PC-3 (cell line): ENCODE measurements at regions of chr2 and their contacts with region 1.

Region 1: GRCh38 chr2:168118733-168119514 is 128.5 kb downstream of the STK39 start:
- DNase-seq: peak; percentile 85
- ATAC-seq: peak; percentile 68
- H3K4me3 ChIP-seq: no peak overlapping the region
- H3K27ac ChIP-seq: no peak overlapping the region
- H3K4me1 ChIP-seq: no peaks in the 10 kb centered on the region
- H3K27me3 ChIP-seq: no peaks in the 10 kb centered on the region
- CTCF ChIP-seq: peak; percentile 87

Region 2: GRCh38 chr2:167264380-167264779 is 854.5 kb before region 1 on chr2:
- CTCF ChIA-PET with region 1: interaction called, 6 read pairs
- POLR2A ChIA-PET with region 1: no interaction called
- intact Hi-C with region 1: loop called (anchors 10 kb)
- DNase-seq: peak; percentile 71
- ATAC-seq: peak; percentile 95
- H3K4me3 ChIP-seq: no peak overlapping the region
- H3K27ac ChIP-seq: no peak overlapping the region
- H3K4me1 ChIP-seq: no peaks in the 10 kb centered on the region
- H3K27me3 ChIP-seq: no peaks in the 10 kb centered on the region
- CTCF ChIP-seq: peak; percentile 87

Region 3: DNA sequence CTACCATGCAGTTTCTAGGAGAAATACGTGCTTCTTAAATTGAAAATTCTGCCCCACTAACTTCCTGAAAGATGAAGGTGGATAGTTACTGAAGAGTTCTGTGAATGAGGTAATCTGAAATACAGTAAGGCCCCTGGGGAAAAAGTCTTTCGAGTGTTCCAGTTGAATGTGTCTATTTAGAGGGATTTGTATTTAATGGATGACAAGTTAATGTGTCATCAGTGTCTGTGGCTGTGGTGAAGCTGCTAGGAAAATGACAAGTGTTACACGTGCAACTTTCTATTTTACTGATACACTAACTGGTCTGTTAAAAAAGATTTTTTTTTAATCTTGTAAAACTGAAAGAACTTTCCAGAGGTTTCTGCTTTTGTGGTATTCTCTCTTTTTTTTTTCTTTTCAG is 256.1 kb before region 1 on chr2:
- CTCF ChIA-PET with region 1: no interaction called
- POLR2A ChIA-PET with region 1: no interaction called
- intact Hi-C with region 1: loop called (anchors 10 kb)
- DNase-seq: peak; percentile 70
- ATAC-seq: peak; percentile 88
- H3K4me3 ChIP-seq: no peak overlapping the region
- H3K27ac ChIP-seq: no peak overlapping the region
- H3K4me1 ChIP-seq: peaks cover 11% of the 10 kb centered on the region; the same call in 1 of the 2 replicates
- H3K27me3 ChIP-seq: no peaks in the 10 kb centered on the region; the same call in 1 of the 2 replicates
- CTCF ChIP-seq: no peak

Region 4: GRCh38 chr2:167964650-167965413 is 154.1 kb before region 1 on chr2:
- CTCF ChIA-PET with region 1: interaction called, 3 read pairs
- POLR2A ChIA-PET with region 1: no interaction called
- intact Hi-C with region 1: loop called (anchors 2 kb)
- DNase-seq: peak; percentile 35
- ATAC-seq: no peak
- H3K4me3 ChIP-seq: no peak overlapping the region
- H3K27ac ChIP-seq: no peak overlapping the region
- H3K4me1 ChIP-seq: no peaks in the 10 kb centered on the region
- H3K27me3 ChIP-seq: no peaks in the 10 kb centered on the region
- CTCF ChIP-seq: peak; percentile 56

Region 5: GRCh38 chr2:168336864-168337263 is 217.9 kb after region 1 on chr2:
- CTCF ChIA-PET with region 1: interaction called, 4 read pairs
- POLR2A ChIA-PET with region 1: no interaction called
- intact Hi-C with region 1: loop called (anchors 5 kb)
- DNase-seq: peak; percentile 92
- ATAC-seq: peak; percentile 96
- H3K4me3 ChIP-seq: no peak overlapping the region
- H3K27ac ChIP-seq: no peak overlapping the region
- H3K4me1 ChIP-seq: peaks cover 4% of the 10 kb centered on the region
- H3K27me3 ChIP-seq: no peaks in the 10 kb centered on the region
- CTCF ChIP-seq: peak; percentile 89